ENCODE measurements at regions of chr4 and their contacts with region 1.

Region 1: GRCh38 chr4:174210354-174210753 is 73.1 kb downstream of the FBXO8 start:
- DNase-seq: no peak
- H3K4me3 ChIP-seq: no peak overlapping the region
- H3K27ac ChIP-seq: no peak overlapping the region
- H3K4me1 ChIP-seq: peaks cover 5 to 18% (median 10%) of the 10 kb centered on the region in 4 experiments
- H3K27me3 ChIP-seq: peaks cover 41 to 48% (median 47%) of the 10 kb centered on the region in 4 experiments
- CTCF ChIP-seq: peak in 1 of 3 experiments; percentile 53; a peak in 2 of 4 replicates
- EP300 ChIP-seq: no peak
- POLR2A ChIP-seq: no peak
- RAD21 ChIP-seq: peak; percentile 16 to 34; a peak in 3 of 4 replicates

Region 2: GRCh38 chr4:174222266-174222872 is 12.0 kb after region 1 on chr4:
- CTCF ChIA-PET with region 1: interaction called, 23 read pairs
- POLR2A ChIA-PET with region 1: no interaction called
- DNase-seq: no peak
- H3K4me3 ChIP-seq: no peak overlapping the region
- H3K27ac ChIP-seq: no peak overlapping the region
- H3K4me1 ChIP-seq: peaks cover 0 to 8% (median 5%) of the 10 kb centered on the region in 4 experiments; a peak in 5 of 7 replicates
- H3K27me3 ChIP-seq: peaks cover 12 to 28% (median 19%) of the 10 kb centered on the region in 4 experiments
- CTCF ChIP-seq: peak in 2 of 3 experiments; percentile 52 to 66; a peak in 3 of 4 replicates
- EP300 ChIP-seq: no peak
- POLR2A ChIP-seq: no peak
- RAD21 ChIP-seq: peak; percentile 39 to 52

Region 3: GRCh38 chr4:174236359-174236758 is 26.0 kb after region 1 on chr4:
- CTCF ChIA-PET with region 1: no interaction called
- POLR2A ChIA-PET with region 1: no interaction called
- DNase-seq: no peak
- H3K4me3 ChIP-seq: no peak overlapping the region
- H3K27ac ChIP-seq: no peak overlapping the region
- H3K4me1 ChIP-seq: no peaks in the 10 kb centered on the region
- H3K27me3 ChIP-seq: no peaks in the 10 kb centered on the region
- CTCF ChIP-seq: no peak
- EP300 ChIP-seq: no peak
- POLR2A ChIP-seq: no peak
- RAD21 ChIP-seq: no peak